ENCODE measurements at regions of chr11 and their contacts with region 1.

Region 1: GRCh38 chr11:64246871-64247728 is at the start of gene PPP1R14B:
- DNase-seq: peak; percentile 87
- ATAC-seq: peak; percentile 65
- H3K4me3 Mint-ChIP-seq: peak within 1 kb of the TSS; percentile 83
- H3K27ac Mint-ChIP-seq: peak within 1 kb of the TSS; percentile 90
- H3K4me1 Mint-ChIP-seq: peaks cover 39% of the 10 kb centered on the region
- H3K27me3 Mint-ChIP-seq: no peaks in the 10 kb centered on the region
- total RNA-seq, gene PPP1R14B: 142 to 177 TPM

Region 2: DNA sequence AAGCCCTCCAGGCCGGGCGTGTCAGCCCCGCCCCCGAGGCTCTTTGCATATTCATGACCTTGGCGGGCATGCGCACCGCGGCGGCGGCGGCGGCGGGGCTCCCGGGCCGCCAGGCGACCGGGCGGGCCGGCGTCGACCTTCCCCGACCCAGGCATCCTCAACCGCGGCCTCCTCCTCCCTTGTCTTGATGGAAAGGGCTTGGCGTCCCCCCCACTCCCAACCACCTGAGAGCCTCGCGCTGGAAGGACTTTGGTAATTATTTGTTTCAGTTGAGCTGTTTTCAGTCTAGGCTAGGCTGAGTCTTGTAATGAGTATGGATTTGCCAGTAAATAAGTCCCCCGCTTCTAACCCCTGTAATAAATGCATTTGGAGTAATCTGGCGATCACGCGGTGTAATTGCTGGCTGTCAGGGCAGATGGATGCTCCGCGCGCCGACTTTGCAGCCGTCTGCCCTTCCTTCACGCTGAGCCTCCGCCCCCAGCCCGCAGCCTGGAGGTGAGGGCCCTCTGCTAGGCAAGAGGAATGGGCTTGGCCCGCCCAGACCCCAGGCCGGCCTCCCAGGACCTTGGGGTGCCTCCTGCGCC is 186.1 kb before region 1 on chr11:
- CTCF ChIA-PET with region 1: no interaction called
- DNase-seq: peak; percentile 72
- ATAC-seq: peak; percentile 89
- H3K4me3 Mint-ChIP-seq: peak overlapping the region; percentile 68
- H3K27ac Mint-ChIP-seq: no peak overlapping the region
- H3K4me1 Mint-ChIP-seq: peaks cover 6% of the 10 kb centered on the region
- H3K27me3 Mint-ChIP-seq: peaks cover 16% of the 10 kb centered on the region

Region 3: GRCh38 chr11:64110465-64111375 is 136.4 kb before region 1 on chr11:
- CTCF ChIA-PET with region 1: no interaction called
- DNase-seq: no peak
- ATAC-seq: no peak
- H3K4me3 Mint-ChIP-seq: no peak overlapping the region
- H3K27ac Mint-ChIP-seq: no peak overlapping the region
- H3K4me1 Mint-ChIP-seq: no peaks in the 10 kb centered on the region
- H3K27me3 Mint-ChIP-seq: no peaks in the 10 kb centered on the region

Region 4: DNA sequence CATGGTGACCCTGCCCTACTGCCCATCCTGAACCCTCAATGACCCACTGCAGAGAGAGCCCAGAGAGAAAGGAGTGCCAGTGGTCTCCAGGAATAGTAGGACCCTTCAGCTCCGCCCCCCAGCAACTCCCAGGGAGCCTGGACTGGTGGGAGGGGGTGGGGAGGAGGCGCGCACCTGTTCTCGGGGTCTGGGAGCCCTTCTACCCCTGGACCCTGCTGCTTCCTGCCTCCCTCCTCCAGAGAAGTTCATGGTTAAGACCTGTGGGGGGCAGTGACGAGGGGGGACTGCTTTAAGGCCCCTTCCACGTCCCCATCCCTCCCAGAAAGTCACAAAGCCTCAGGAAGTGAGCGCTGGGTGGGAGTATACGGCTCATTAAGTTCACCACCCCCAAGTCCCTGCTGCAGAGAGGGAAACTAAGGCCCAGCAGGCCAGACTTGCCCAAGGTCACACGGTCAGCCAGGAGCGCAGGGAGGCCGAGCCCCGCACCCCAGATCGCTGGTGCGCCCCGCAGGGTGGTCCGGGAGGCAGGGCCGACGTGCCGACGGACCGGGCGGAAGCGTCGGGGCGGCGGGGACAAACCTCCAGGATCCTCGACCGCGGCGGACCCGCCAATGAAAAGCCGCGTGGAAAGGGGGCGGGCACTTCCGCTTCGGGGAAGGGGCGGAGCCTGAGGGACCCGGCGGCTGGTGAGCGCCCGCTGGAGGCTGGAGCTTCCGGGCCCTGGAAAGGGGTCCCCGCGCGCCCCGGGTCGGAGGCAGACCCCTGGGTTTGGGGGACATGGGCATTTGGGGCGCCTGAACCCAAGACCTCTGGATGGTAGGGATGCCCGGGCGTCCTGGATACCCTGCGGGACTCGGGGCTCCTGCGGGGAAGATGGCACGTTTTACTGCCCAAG is 21.2 kb before region 1 on chr11 and contains the starts of genes NUDT22 and TRPT1:
- CTCF ChIA-PET with region 1: interaction called, 14 read pairs
- DNase-seq: peak; percentile 96
- ATAC-seq: peak; percentile 71
- H3K4me3 Mint-ChIP-seq: peak within 1 kb of the TSS; percentile 87
- H3K27ac Mint-ChIP-seq: peak within 1 kb of the TSS; percentile 90
- H3K4me1 Mint-ChIP-seq: peaks cover 35% of the 10 kb centered on the region
- H3K27me3 Mint-ChIP-seq: no peaks in the 10 kb centered on the region
- total RNA-seq, gene NUDT22: 83.8 to 84.1 TPM
- total RNA-seq, gene TRPT1: 33.4 to 37.1 TPM

Region 5: DNA sequence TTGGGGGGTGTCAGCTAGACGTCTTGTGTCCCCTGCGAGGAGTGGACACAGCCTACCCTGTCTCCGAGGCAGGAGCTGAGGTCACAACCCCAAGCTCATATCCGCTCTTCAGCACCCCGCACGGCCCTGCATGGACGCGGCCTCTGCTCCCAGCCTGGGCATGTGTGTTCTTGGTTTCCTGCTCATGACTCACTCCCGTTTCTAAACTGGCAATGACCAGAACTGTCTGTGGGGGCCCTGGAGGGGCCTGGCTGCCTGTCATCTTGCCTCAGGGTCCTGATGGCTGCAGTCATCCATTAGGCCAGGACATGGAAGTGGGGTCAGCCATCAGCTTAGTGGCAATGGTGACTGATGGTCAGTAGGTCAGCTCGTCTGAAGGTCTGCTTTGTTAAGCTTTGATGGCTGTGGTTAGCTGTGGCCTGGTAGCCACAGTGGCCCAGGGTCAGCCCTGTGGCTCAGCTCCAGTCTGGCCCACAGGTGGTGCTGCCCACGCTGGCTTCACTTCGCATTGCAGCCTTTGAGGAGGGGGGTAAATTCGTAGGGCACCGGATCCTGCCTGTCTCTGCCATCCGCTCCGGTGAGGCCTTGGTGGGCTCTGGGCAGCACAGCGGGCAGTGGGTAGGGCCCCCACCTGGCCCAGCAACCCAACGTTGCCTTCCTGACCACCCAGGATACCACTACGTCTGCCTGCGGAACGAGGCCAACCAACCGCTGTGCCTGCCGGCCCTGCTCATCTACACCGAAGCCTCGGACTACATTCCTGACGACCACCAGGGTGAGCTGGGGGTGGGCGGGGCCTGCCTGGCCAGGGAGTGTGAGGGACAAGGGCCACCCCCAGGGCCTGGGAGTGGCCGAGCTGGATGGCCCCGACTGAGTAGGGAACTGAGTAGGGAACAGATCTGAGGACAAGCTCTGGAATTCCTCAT is 16.2 kb after region 1 on chr11:
- CTCF ChIA-PET with region 1: interaction called, 68 read pairs
- DNase-seq: no peak
- ATAC-seq: no peak
- H3K4me3 Mint-ChIP-seq: no peak overlapping the region
- H3K27ac Mint-ChIP-seq: no peak overlapping the region
- H3K4me1 Mint-ChIP-seq: peaks cover 21% of the 10 kb centered on the region
- H3K27me3 Mint-ChIP-seq: no peaks in the 10 kb centered on the region

Region 6: DNA sequence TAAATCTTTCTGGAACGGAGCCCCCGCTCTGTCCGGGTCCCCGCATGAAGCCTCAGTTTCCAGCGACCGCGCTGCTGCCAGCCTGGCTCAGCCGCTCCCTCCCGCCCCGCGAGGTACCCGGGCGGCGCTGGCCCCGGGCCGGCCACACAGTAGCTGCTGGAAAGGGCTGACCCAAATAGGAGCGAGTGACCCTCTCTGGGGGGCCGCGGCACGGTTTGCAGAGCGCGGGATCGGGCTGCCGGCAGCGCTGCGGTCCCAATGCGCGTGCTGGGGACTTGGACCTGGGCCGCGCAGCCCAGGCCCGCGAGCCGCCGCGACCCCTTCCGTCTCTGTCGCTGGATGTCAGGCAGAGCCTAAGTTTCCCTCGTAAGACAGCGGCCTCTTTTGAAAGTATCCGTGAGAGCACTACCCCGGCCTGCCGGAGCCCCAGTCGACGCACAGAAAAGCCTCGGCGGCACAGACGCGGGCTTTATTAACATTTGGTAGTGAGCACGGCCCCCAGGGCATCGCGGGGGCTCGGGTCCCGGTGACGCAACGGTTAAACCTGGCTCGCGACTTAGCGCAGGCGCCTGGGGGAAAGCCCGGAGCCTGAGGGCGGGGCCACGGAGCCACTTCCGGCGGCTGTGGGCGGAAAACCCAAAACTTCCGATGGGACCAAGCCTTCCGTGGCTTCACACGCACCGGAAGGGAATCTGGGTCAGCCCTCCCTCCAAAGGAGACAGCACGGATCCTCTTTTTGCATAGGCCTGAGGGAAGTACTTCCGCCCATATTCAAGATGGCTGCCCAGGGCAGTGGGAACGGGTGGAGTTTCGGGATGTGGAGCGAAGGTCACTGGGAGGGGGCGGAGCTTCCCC is 22.5 kb after region 1 on chr11:
- CTCF ChIA-PET with region 1: interaction called, 68 read pairs
- DNase-seq: peak; percentile 98
- ATAC-seq: peak; percentile 71
- H3K4me3 Mint-ChIP-seq: peak overlapping the region; percentile 89
- H3K27ac Mint-ChIP-seq: peak overlapping the region; percentile 96
- H3K4me1 Mint-ChIP-seq: peaks cover 31% of the 10 kb centered on the region
- H3K27me3 Mint-ChIP-seq: no peaks in the 10 kb centered on the region

Region 7: DNA sequence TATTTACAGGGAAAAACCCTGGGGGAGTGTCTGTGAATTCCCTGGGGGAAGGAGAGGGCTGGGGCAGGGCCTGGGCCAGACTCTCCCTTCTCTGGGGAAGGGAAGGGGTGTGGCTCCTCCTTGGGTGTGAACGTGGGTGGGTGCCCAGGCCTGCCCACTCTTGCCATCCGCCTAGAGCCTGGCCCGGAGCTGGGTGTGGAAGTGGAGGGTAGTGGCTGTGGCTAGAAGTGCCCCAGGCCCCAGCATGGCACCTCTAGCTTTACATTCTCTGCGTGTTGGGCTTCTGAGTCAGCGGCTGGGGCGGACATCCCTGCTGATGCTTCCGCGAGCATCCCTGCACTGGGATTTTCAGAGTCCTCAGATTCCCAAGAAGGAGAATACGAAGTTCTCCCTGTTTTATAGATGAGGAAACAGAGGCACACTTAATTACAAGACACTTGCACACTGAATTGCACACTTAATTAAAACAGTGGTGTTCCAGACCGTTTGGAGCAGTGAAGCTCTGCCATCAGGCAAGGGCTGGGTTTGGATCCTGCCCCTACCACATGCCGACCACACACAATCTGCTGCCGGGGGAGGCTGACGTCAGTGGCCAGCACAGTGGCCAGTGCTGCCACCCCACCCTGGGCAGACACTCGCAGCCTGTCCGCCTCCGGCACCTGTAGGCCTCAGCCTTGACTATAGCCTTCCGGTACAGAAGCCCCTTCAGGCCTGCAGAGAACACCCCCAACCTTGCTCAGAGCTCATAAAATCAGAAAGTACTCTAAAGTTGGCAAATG is 29.7 kb after region 1 on chr11:
- CTCF ChIA-PET with region 1: interaction called, 68 read pairs
- DNase-seq: no peak
- ATAC-seq: no peak
- H3K4me3 Mint-ChIP-seq: no peak overlapping the region
- H3K27ac Mint-ChIP-seq: no peak overlapping the region
- H3K4me1 Mint-ChIP-seq: peaks cover 14% of the 10 kb centered on the region
- H3K27me3 Mint-ChIP-seq: no peaks in the 10 kb centered on the region

Region 8: GRCh38 chr11:64284048-64284961 is 37.2 kb after region 1 on chr11 and contains the start of gene BAD:
- CTCF ChIA-PET with region 1: interaction called, 11 read pairs
- DNase-seq: peak; percentile 96
- ATAC-seq: peak; percentile 85
- H3K4me3 Mint-ChIP-seq: peak within 1 kb of the TSS; percentile 79
- H3K27ac Mint-ChIP-seq: peak within 1 kb of the TSS; percentile 89
- H3K4me1 Mint-ChIP-seq: peaks cover 18% of the 10 kb centered on the region
- H3K27me3 Mint-ChIP-seq: no peaks in the 10 kb centered on the region
- total RNA-seq, gene BAD: 35.6 to 36.1 TPM